Gastrocnemius medialis (tissue), 4 donors: ENCODE measurements at regions of chr15 and their contacts with region 1.

Region 1: DNA sequence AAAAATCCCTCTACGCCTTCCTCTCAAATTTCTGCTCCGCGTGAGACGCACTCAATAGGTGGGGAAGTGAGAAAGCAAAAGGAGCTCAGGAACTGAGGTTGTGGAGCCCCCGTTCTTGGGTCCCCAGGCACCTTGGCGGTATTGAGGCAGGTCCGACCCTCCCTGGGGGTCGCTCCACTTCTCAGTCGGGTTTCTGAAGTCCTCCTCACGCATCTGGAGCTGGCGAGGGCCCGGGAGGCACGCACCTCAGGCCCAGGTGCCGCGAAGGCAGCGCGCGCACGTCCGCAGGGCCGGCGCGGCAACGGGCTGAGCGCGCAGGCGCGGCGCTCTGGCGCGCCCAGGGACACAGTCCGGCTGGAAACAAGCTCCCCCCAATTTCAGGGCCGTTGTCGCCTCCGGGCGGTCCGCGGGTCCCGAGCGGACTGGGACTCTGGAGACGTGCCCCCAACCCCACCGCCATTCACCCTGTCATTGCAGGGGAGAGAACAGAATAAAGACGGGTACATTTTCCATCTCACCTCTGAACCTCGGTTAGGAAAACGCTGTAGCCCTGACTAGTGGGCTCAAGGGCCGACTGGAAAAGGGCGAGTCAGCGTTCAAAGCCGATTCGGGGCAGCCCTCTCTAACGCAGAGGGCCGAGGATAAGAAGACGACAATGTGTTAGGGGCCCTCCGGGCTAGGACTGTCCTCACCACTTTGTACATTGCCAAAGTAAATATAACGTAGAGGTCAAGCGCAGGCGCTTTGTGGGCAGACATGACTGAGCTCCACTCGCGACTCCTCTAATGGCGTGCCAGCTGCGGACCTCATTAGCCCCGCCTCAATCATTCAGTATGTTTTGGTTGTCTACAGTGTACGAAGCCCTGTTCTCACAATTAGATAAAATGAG is at the start of gene ZNF770:
- DNase-seq: peak; percentile 47 to 73
- ATAC-seq: peak; percentile 86 to 91
- H3K4me3 ChIP-seq: peak within 1 kb of the TSS; percentile 69 to 96 (median 86)
- H3K27ac ChIP-seq: peak within 1 kb of the TSS; percentile 92 to 97 (median 94)
- H3K4me1 ChIP-seq: peaks cover 27 to 35% of the 10 kb centered on the region in 2 donors
- H3K27me3 ChIP-seq: peaks cover 0 to 6% (median 0%) of the 10 kb centered on the region in 3 donors
- CTCF ChIP-seq: peak in 3 of 5 experiments; percentile 16 to 42 (median 36)
- POLR2A ChIP-seq: peak; percentile 87 to 92
- total RNA-seq, gene ZNF770: 33.2 to 55.2 (median 49.0) TPM

Region 2: DNA sequence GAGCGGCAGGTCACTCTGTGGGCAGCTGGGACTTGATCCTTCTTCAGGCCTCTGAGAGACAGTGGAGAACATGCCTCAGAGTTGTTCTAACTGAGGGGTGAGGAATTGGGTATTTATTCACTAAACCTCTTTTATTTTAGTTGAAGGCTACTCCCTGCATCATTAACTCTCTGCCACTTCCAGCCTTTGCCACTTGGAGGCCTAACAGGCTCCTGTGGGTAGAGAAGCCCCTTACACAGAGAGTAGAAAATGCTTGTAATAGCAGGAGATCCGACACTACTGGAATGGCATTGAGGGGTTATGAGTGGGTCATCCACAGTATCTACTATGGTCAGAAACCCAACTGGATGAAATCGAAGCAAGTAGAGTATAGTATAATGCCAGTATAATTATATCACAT is 1595.8 kb before region 1 on chr15:
- in situ Hi-C with region 1: no loop called
- intact Hi-C with region 1: loop called (anchors 10 kb)
- DNase-seq: no peak
- ATAC-seq: no peak
- H3K4me3 ChIP-seq: no peak overlapping the region
- H3K27ac ChIP-seq: no peak overlapping the region
- H3K4me1 ChIP-seq: peaks cover 34 to 60% of the 10 kb centered on the region in 2 donors
- H3K27me3 ChIP-seq: no peaks in the 10 kb centered on the region
- CTCF ChIP-seq: no peak
- POLR2A ChIP-seq: no peak

Region 3: GRCh38 chr15:34209421-34210282 is 778.6 kb before region 1 on chr15 and contains the start of gene KATNBL1:
- in situ Hi-C with region 1: loop called in 1 of 4 experiments (anchors 25 kb)
- intact Hi-C with region 1: no loop called
- DNase-seq: peak; percentile 88 to 93
- ATAC-seq: peak; percentile 96 to 98
- H3K4me3 ChIP-seq: peak within 1 kb of the TSS; percentile 58 to 73 (median 69)
- H3K27ac ChIP-seq: peak within 1 kb of the TSS; percentile 3 to 84 (median 75)
- H3K4me1 ChIP-seq: peaks cover 12% of the 10 kb centered on the region in 2 donors
- H3K27me3 ChIP-seq: no peaks in the 10 kb centered on the region
- CTCF ChIP-seq: peak; percentile 92 to 96 (median 96)
- POLR2A ChIP-seq: peak; percentile 63 to 92
- total RNA-seq, gene KATNBL1: 9.2 to 24.9 (median 12.3) TPM

Region 4: DNA sequence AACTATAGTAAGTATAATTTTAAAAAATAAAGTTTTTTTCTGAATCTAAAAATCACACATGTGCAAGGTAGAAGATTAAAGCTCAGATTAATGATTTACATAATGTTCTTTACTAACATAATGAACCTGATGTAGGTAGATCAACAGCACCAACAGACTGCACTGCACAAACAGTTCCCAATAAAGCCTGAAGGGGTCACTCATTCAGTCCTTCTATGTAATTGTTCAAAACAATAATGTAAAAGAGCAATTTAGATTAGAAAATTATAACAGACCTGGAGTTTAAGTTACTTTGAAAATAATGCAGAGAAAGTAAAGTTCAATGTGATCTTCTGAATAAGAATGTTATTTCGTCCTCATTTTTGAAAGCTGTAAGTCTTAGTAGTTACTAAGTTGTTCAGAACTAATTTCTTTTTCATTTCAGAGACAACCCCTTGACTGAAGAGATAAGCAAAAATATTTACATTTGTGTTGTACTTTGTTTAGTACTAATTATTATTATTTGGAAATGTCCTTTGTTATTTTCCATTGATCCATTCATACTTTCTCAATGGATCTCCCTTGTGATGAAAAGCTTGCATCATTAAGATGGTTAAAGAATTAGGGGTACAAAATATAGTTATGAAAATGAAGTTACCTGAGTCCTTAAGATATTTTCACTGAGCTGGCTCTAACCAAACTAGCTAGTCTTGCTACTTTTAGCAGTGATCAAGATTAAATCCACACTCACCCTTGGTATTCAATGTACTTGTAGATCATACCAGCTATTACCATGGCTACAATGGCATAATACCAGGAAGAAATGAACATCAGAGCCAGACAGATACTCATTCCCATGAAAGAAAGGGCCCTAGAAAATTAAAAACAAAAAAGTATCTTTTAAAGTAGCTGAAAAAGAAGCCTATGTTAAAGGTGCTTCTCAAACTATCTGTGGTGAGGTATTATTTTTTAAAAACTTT is 746.6 kb before region 1 on chr15:
- in situ Hi-C with region 1: loop called in 1 of 4 experiments (anchors 25 kb)
- intact Hi-C with region 1: no loop called
- DNase-seq: no peak
- ATAC-seq: peak in 1 of 2 donors; percentile 58
- H3K4me3 ChIP-seq: no peak overlapping the region
- H3K27ac ChIP-seq: no peak overlapping the region
- H3K4me1 ChIP-seq: no peaks in the 10 kb centered on the region
- H3K27me3 ChIP-seq: no peaks in the 10 kb centered on the region
- CTCF ChIP-seq: peak in 4 of 5 experiments; percentile 40 to 72 (median 55)
- POLR2A ChIP-seq: no peak

Region 5: DNA sequence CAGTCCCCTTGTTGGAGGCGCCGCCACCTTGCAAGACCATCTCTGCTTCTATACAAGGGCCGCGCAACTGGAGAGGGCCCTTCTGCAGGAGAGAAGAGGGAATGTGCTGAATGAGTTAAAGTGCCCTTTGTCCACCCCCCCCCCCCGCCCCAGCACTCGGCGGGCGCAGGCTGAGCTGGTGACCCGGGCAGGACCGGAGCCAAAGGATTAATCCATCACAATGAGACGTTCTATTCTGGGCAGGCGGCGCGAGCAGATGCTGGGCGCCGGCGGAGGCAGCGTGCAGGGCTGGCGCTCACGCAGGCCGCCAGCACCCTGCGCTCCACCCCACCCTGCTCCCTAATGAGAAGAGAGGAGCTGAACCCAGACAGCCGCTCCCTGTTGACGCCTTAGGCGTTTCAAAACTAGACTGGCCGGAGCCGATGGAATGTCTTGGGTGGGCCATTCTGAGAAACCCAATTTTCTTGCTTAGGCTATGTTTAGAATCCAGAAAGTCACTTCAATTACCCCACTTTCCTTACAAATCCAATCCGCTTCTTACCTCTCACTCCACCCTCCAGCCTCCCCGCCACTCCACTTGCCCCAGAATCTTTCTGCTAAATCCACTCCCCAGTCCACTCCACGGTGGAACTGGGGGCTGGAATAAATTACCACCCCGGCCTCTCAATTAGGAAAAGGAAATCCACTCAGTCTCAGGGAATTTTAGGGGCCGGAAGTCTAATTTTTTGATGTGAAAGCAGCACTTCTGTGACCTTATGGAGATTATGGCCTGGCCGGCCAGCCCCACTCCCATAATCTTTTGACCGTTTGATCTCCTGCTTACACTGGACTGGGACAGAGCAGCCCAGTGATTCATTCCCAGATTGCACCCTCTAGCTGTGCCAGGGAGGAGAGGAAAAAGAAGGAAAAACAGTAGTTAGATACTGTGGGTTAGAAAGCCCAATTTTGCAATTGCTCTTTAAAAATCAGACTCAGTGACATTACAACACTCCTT is 266.1 kb before region 1 on chr15:
- in situ Hi-C with region 1: no loop called
- intact Hi-C with region 1: loop called (anchors 1 kb)
- DNase-seq: peak; percentile 30 to 64
- ATAC-seq: peak; percentile 45 to 46
- H3K4me3 ChIP-seq: peak overlapping the region in 3 of 4 donors; percentile 19 to 35 (median 19)
- H3K27ac ChIP-seq: peak overlapping the region; percentile 35 to 61 (median 40)
- H3K4me1 ChIP-seq: peaks cover 50 to 59% of the 10 kb centered on the region in 2 donors
- H3K27me3 ChIP-seq: no peaks in the 10 kb centered on the region
- CTCF ChIP-seq: no peak
- POLR2A ChIP-seq: peak; percentile 26 to 32

Region 6: GRCh38 chr15:35159170-35159569 is 170.9 kb after region 1 on chr15:
- in situ Hi-C with region 1: no loop called
- intact Hi-C with region 1: no loop called
- DNase-seq: no peak
- ATAC-seq: no peak
- H3K4me3 ChIP-seq: no peak overlapping the region
- H3K27ac ChIP-seq: no peak overlapping the region
- H3K4me1 ChIP-seq: no peaks in the 10 kb centered on the region
- H3K27me3 ChIP-seq: no peaks in the 10 kb centered on the region
- CTCF ChIP-seq: no peak
- POLR2A ChIP-seq: no peak